Prostate gland (tissue), 2 donors: ENCODE measurements at regions of chr1 and their contacts with region 1.

Region 1: GRCh38 chr1:11907275-11908094 is 18.7 kb downstream of the KIAA2013 start:
- DNase-seq: peak; percentile 90
- H3K4me3 ChIP-seq: peak overlapping the region in 1 of 2 donors; percentile 54
- H3K27ac ChIP-seq: peak overlapping the region; percentile 99
- H3K4me1 ChIP-seq: no peaks in the 10 kb centered on the region
- H3K27me3 ChIP-seq: no peaks in the 10 kb centered on the region
- CTCF ChIP-seq: peak; percentile 21 to 95 (median 78)
- POLR2A ChIP-seq: no peak

Region 2: DNA sequence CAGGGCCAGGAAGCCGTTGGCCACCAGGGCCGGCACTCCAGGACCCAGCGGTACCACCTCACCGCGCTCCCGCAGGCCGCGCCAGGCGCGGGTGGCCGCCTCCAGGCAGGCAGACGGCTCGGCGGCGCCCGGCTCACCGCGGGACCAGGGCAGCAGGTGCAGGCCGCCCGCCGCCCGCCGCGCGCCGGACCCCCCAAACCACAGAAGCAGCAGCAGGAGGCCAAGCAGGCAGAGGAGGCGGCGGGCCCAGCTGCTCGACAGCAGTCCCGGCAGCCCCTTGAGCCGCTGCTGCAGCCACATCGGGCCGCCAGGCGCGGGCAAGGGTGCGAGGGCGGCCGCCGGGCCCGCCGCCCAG is 18.4 kb after region 1 on chr1:
- intact Hi-C with region 1: loop called (anchors 2 kb)
- DNase-seq: no peak
- H3K4me3 ChIP-seq: peak overlapping the region; percentile 59 to 65
- H3K27ac ChIP-seq: peak overlapping the region in 1 of 2 donors; percentile 38
- H3K4me1 ChIP-seq: peaks cover 12% of the 10 kb centered on the region
- H3K27me3 ChIP-seq: no peaks in the 10 kb centered on the region
- CTCF ChIP-seq: no peak
- POLR2A ChIP-seq: no peak

Region 3: DNA sequence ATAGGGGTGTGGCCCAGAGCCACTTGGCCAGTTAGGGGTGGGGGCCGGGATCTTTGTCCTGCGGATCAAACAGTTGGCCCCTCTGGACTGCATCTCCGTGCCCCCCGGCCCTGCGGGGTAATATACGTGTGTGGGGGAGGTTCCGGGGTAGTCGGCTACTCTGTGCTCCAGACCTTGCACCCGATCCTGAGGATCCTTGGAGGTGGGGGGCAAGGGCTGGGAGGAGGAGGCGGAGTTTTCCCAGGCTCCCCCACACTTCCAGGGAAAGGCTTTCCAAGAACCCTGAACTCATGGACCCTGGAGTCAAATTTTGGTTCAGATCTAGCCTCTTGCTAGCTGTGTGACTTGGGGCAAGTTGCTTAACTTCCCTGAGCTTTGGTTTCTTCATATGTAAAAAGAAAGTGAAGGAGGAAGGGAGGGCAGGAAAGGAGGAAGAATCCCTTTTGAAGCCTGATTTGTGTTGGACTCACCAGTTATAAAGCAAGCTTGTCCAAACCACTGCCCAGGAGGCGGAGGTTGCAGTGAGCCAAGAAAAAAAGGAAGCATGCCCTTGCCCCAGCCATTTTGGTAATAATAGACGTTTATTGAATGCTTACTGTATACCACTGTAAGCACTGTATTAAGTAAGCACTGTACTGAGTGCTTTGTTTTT is 112.5 kb after region 1 on chr1:
- intact Hi-C with region 1: loop called (anchors 10 kb)
- DNase-seq: no peak
- H3K4me3 ChIP-seq: peak overlapping the region; percentile 85 to 93
- H3K27ac ChIP-seq: peak overlapping the region; percentile 61 to 71
- H3K4me1 ChIP-seq: no peaks in the 10 kb centered on the region
- H3K27me3 ChIP-seq: no peaks in the 10 kb centered on the region
- CTCF ChIP-seq: no peak
- POLR2A ChIP-seq: no peak